ENCODE measurements at regions of chr1 and their contacts with region 1.

Region 1: DNA sequence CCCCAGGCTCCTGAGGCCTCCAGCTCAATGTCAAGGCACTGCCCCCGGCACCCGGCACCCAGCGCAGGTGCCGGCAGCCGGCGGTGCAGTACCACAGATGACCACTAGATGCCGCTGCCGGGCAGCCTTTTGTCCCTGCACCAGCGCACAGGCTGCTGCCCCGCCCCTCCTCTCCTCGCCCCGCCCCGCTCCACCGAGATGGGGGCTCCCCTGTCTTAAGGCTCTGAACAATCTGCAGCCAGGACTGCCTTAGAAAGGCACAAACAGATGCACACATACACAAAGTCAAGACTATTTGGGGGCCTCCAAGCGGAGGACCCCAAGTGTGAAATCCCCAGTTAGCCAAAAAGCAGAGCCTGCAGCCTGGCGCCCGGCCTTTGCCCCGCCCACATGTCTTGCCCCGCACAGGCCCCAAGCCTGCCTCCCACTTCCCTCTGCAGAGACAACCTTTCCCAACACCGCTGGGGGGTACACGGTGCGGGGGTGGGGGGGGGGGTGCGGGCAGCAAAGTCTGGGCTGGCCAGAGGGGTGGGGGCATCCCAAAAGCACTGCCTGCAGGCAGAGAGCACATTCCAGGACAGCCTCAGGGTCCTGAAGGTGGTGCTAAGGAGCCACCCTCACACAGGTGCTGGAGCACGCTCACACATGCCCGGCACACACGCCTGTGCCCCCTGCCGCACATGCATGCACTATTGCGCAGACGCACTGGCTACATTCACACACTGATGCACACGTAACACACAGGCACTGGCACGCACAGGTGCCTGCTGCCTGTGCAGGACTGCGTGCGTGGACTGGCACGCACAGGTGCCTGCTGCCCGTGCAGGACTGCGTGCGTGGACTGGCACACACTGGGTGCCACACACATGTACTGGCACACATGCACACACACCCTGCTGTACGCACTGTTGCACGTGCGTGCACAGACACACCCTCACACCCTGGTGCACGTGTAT is 37.1 kb downstream of the ARHGEF16 start:
- DNase-seq: peak; percentile 90
- ATAC-seq: peak; percentile 89

Region 2: DNA sequence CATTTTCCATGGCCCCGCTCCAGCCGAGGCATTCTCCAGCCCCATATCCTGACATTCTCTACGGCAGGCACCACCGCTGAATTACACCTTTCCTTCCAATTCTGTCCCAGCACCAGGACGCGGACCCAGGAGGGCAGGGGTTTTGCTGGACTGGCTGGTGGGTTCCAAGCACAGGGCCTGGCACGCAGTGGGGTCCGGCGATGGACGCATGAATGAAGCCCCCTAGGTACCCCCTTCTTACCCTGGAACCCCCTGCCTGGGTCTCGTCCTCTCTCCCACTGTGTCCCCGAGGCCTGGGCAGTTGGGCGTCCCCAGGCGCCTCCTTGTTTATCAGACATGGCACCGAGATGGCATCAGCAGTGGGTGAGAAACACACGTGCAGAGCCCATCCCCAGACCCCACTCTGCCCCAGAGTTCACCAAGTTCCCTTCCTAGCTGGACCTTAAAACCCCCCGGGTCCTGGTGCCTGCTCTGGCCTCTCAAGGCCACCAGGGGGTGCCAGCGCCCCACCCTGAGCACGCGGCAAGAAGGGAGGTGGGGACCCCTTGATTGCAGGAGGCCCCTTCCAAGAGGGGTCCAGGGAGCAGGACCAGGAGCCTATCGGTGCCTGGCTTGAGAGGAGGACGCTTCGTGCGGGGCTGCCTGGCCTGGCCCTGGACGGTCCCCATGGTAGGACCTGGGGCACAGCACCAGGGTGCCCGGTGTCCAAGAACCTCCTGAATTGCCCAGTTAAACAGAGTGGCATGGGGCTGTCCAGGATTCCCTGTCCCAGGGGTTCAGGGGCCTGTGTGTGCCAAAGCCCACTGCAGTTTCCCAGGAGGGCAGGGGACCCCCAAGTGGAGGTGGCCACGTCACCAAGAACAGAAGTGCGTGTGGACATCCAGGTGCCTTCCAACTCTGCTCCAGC is 73.6 kb after region 1 on chr1:
- intact Hi-C with region 1: loop called (anchors 10 kb)
- DNase-seq: no peak
- ATAC-seq: peak; percentile 19

Region 3: DNA sequence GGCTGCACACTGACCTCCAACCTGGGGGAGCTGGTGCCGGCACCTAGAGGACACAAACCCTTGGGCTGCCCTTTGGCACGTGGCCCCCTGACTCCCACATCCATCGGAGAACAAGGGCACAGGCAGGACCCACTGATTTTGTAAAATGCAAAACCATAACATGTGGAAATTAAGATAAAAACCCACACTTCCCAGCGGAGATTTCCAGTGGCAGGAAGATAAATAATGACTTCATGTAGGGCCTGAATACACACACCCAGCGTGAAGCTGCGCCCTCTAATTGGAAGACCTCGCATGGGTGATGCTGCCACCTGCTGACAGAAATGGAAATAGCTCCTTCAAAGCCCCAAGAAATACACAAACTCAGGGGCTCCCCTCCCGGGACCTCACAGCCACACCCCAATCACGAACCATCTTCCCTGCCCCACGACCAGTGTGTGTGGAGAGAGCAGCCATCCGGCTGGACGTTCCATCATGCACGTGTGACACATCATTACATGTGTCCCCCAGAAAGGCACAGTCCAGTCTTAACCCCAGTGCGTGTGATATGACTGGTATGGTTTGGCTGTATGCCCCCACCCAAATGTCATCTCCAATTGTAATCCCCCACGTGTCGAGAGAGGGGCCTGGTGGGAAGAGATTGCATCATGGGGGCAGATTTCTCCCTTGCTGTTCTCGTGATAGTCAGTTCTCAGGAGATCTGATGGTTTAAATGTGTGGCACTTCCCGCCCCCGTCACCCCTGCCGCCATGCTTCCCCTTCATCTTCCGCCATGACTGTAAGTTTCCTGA is 127.5 kb after region 1 on chr1:
- intact Hi-C with region 1: loop called (anchors 5 kb)
- DNase-seq: peak; percentile 88
- ATAC-seq: peak; percentile 82

Measured in sciatic nerve (tissue), 2 donors.